Activated naive CD8-positive, alpha-beta T cell treated with anti-CD3 and anti-CD28 coated beads, Interleukin-2, amount 10 ng/mL, durations not matched to agents 7 days and 5 days (primary cell): ENCODE measurements at regions of chr11 and their contacts with region 1.

Region 1: DNA sequence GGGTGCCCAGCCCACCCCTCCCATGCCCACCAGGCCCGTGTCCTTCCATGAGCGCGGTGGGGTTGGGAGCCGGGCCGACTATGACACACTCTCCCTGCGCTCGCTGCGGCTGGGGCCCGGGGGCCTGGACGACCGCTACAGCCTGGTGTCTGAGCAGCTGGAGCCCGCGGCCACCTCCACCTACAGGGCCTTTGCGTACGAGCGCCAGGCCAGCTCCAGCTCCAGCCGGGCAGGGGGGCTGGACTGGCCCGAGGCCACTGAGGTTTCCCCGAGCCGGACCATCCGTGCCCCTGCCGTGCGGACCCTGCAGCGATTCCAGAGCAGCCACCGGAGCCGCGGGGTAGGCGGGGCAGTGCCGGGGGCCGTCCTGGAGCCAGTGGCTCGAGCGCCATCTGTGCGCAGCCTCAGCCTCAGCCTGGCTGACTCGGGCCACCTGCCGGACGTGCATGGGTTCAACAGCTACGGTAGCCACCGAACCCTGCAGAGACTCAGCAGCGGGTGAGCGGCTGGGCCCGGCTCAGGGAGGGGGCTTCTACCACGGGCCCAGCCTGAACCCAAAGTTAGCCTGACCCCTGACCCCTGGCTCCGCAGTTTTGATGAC is 3.0 kb downstream of the PKP3 start:
- DNase-seq: peak; percentile 68
- ATAC-seq: peak; percentile 73
- H3K4me3 Mint-ChIP-seq: no peak overlapping the region
- H3K27ac Mint-ChIP-seq: no peak overlapping the region
- H3K4me1 Mint-ChIP-seq: no peaks in the 10 kb centered on the region
- H3K27me3 Mint-ChIP-seq: no peaks in the 10 kb centered on the region

Region 2: DNA sequence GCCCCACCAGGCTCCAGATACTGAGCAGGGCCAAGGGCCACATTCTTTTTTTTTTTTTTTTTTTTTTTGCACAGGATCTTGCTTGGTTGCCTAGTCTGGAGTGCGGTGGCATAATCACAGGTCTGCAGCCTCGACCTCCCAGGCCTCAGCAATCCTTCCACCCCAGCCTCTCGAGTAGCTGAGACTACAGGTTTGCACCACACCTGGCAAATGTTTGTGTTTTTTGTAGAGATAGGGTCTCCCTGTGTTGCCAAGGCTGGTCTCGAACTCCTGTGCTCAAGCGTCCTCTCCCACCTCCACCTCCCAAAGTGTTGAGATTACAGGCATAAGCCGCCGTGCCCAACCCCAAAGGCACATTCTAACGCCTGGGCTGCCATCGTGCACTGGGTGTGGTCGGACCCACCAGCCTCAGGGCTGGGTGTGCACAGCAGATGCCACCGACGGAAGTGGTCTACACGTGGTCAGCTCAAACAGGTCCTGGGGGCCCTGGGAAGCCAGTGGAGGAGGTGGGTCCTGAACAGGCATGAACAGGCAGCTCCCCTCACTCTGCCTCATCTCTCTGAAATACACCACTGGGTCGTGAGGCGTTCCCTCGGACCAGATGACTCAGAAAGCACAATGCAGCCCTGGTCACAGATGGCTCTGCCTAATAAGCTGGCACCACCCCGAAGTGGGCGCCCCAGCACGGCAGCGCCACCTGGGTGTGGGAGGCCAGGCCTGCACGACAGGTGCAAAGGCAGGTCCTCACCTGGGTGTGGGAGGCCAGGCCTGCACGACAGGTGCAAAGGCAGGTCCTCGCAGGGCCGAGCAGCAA is 32.9 kb before region 1 on chr11:
- POLR2A ChIA-PET with region 1: no interaction called
- DNase-seq: peak; percentile 61
- ATAC-seq: peak; percentile 62
- H3K4me3 Mint-ChIP-seq: no peak overlapping the region
- H3K27ac Mint-ChIP-seq: no peak overlapping the region
- H3K4me1 Mint-ChIP-seq: peaks cover 11% of the 10 kb centered on the region
- H3K27me3 Mint-ChIP-seq: peaks cover 27% of the 10 kb centered on the region

Region 3: GRCh38 chr11:406978-407739 is 10.1 kb after region 1 on chr11:
- POLR2A ChIA-PET with region 1: interaction called, 11 read pairs
- DNase-seq: peak; percentile 95
- ATAC-seq: peak; percentile 93
- H3K4me3 Mint-ChIP-seq: peak overlapping the region; percentile 25
- H3K27ac Mint-ChIP-seq: peak overlapping the region; percentile 61
- H3K4me1 Mint-ChIP-seq: peaks cover 5% of the 10 kb centered on the region
- H3K27me3 Mint-ChIP-seq: no peaks in the 10 kb centered on the region

Region 4: GRCh38 chr11:422249-422656 is 25.2 kb after region 1 on chr11:
- POLR2A ChIA-PET with region 1: no interaction called
- DNase-seq: no peak
- ATAC-seq: no peak
- H3K4me3 Mint-ChIP-seq: no peak overlapping the region
- H3K27ac Mint-ChIP-seq: no peak overlapping the region
- H3K4me1 Mint-ChIP-seq: peaks cover 2% of the 10 kb centered on the region
- H3K27me3 Mint-ChIP-seq: no peaks in the 10 kb centered on the region